ENCODE measurements at regions of chr16 and their contacts with region 1.

Region 1: DNA sequence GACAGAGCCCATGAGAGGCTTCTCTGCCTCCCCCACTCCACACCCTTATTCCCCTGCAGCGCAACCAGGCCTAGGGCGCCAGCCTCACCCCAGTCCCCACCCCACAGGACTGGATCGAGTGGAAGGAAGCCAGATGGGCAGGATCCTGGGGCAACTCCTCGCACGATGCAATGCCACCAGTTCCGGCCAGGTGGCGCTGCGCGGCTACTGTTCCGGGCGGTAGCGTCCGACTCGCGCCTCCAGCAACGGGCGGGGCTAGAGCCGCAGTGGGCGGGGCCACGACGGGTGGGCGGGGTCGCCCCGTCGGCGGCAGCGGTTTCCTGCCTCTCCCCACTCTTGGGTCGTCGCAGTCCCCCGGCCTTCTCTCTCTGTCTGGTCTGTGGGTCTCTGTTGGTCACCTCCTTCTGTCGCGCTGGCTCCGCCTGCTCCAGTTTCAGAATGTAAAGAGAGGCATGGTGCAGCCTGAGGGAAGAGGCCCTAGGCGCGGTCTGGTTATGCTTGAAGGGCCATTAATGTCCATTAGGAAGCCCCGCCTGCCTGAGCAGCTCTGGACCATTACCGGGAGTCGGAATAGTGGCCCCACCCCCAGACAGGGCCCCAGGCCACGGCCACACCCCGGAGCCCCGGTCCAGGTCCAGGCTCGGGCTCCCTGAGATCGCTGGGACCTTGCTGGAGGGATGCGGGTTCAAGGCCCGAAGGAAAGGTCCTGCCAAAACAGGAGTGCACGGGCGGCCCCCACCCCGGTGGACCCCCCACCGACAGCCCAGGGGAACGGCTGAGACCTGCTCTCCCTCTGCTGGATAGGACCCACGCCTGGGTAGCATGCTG is 3.4 kb upstream of the NHERF2 start:
- DNase-seq: peak; percentile 96
- H3K4me3 ChIP-seq: peak overlapping the region; percentile 8 to 44 (median 36)
- H3K27ac ChIP-seq: peak overlapping the region; percentile 64 to 78 (median 71)
- H3K4me1 ChIP-seq: peaks cover 4 to 57% (median 51%) of the 10 kb centered on the region in 4 donors
- H3K27me3 ChIP-seq: peaks cover 25 to 36% (median 33%) of the 10 kb centered on the region in 3 donors
- CTCF ChIP-seq: peak; percentile 95 to 98 (median 96)
- EP300 ChIP-seq: no peak
- POLR2A ChIP-seq: no peak

Region 2: DNA sequence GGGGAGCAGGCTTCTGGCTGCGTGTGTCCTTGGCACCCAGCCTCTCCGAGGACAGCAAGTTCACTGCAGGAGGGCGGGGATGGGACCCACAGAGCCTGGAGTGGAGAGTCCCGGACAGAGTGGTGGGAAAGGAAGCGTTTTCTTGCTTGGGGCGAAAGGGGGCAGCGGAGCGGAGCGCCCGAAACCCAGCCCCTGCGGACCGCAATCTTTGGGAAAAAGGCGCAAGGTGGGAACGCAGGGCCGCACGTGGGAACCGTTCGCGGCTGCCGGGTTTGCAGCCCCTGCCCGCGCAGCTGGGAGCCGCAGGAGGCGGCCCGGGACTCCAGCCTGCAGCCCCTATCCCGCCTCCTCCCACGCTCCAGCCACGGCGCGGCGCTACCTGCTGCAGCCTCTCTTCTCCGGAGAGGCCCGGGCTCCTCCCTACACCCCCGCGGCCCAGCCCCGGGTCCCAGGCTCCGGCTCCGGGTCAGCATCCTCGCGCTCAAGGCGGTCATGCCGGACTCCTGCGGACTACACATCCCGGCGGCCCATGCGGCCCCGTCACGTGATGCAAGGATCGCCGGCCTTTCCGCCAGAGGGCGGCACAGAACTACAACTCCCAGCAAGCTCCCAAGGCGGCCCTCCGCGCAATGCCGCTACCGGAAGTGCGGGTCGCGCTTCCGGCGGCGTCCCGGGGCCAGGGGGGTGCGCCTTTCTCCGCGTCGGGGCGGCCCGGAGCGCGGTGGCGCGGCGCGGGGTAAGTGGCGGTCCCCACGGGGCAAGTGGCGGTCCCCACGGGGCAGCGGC is 24.2 kb after region 1 on chr16 and contains the starts of genes NTHL1 and TSC2:
- intact Hi-C with region 1: loop called (anchors 2 kb)
- DNase-seq: peak; percentile 98
- H3K4me3 ChIP-seq: peak within 1 kb of the TSS; percentile 87 to 95 (median 92)
- H3K27ac ChIP-seq: peak within 1 kb of the TSS; percentile 79 to 84 (median 82)
- H3K4me1 ChIP-seq: peaks cover 0 to 37% (median 30%) of the 10 kb centered on the region in 4 donors
- H3K27me3 ChIP-seq: no peaks in the 10 kb centered on the region
- CTCF ChIP-seq: peak in 3 of 4 experiments; percentile 29 to 48 (median 31)
- EP300 ChIP-seq: no peak
- POLR2A ChIP-seq: no peak
- total RNA-seq, gene NTHL1: 18.4 to 33.8 (median 25.6) TPM
- total RNA-seq, gene TSC2: 25.0 to 80.9 (median 36.9) TPM

Region 3: GRCh38 chr16:2142942-2143877 is 119.9 kb after region 1 on chr16:
- intact Hi-C with region 1: loop called (anchors 2 kb)
- DNase-seq: no peak
- H3K4me3 ChIP-seq: no peak overlapping the region
- H3K27ac ChIP-seq: no peak overlapping the region
- H3K4me1 ChIP-seq: peaks cover 0 to 16% (median 9%) of the 10 kb centered on the region in 4 donors
- H3K27me3 ChIP-seq: no peaks in the 10 kb centered on the region
- CTCF ChIP-seq: no peak
- EP300 ChIP-seq: no peak
- POLR2A ChIP-seq: no peak

Measured in sigmoid colon (tissue), 7 donors.